ENCODE measurements at regions of chr1 and their contacts with region 1.

Region 1: DNA sequence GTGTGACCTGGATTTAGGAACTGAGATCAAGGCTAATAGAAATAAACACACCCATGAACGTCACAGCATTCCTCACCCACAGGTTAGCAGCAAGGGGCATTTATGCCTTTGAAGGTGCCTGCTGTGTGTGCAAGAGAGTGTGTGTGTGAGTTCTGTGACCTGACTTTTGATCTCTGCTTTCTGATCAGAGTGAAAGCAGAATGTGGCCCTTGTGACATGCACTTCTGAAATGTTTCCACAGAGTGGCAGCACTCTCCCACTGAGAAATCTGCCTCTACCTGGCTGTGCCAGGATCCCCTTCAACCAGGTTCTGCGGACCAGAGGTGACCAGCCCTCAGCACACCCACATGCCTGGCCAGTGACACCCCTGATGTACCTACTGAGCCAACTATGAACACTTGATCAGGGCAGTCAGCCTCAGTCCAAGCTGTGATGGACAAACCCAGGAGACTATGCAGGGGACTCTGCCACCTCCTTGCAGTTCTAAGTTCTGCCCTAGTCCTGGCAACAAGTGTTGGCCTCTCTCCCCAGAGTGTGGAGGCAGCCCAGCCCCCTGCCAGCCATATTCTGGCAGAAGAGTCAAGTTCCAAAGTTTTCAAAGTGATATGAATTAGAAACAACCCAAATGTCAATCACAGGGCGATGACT is 41.0 kb downstream of the RXRG start:
- DNase-seq: peak in 1 of 4 donors; percentile 30
- ATAC-seq: peak; percentile 90
- H3K4me3 ChIP-seq: no peak overlapping the region
- H3K27ac ChIP-seq: no peak overlapping the region
- H3K4me1 ChIP-seq: no peaks in the 10 kb centered on the region
- H3K27me3 ChIP-seq: peaks cover 0 to 23% of the 10 kb centered on the region in 2 donors
- CTCF ChIP-seq: peak; percentile 28 to 43

Region 2: GRCh38 chr1:165597883-165598675 is 194.1 kb after region 1 on chr1:
- intact Hi-C with region 1: loop called (anchors 5 to 10 kb)
- DNase-seq: peak; percentile 94 to 98 (median 97)
- ATAC-seq: peak; percentile 99
- H3K4me3 ChIP-seq: peak overlapping the region; percentile 45 to 47
- H3K27ac ChIP-seq: peak overlapping the region; percentile 54 to 88
- H3K4me1 ChIP-seq: peaks cover 0 to 23% of the 10 kb centered on the region in 2 donors
- H3K27me3 ChIP-seq: peaks cover 9 to 29% of the 10 kb centered on the region in 2 donors
- CTCF ChIP-seq: no peak